ENCODE measurements at regions of chr7 and their contacts with region 1.

Region 1: DNA sequence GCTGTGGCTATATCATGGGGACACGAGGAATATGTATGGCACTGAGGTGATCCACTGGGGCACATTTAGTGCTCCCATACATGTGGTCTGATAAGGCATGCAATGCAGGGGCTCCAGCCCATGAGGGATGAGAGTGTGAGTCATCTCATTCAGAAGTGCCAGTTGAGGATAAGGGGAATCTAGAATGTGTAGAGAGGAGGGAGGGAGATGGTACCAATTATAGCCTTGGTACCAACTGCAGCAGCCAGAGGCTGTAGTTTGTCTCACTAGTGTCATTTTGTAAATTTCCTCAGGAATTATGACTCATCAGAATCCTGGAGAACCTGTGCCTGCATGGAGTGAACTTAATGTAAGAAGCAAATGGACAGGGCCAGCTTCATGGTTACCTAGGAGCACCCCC is 46.2 kb downstream of the LAMB4 start:
- DNase-seq: no peak
- H3K4me3 ChIP-seq: no peak overlapping the region
- H3K27ac ChIP-seq: no peak overlapping the region
- H3K4me1 ChIP-seq: peaks cover 16% of the 10 kb centered on the region
- H3K27me3 ChIP-seq: no peaks in the 10 kb centered on the region
- CTCF ChIP-seq: no peak

Region 2: GRCh38 chr7:108094346-108094745 is 10.4 kb after region 1 on chr7:
- CTCF ChIA-PET with region 1: no interaction called
- POLR2A ChIA-PET with region 1: interaction called, 22 read pairs
- intact Hi-C with region 1: no loop called
- DNase-seq: no peak
- H3K4me3 ChIP-seq: no peak overlapping the region
- H3K27ac ChIP-seq: no peak overlapping the region
- H3K4me1 ChIP-seq: peaks cover 10% of the 10 kb centered on the region
- H3K27me3 ChIP-seq: no peaks in the 10 kb centered on the region
- CTCF ChIP-seq: no peak

Region 3: DNA sequence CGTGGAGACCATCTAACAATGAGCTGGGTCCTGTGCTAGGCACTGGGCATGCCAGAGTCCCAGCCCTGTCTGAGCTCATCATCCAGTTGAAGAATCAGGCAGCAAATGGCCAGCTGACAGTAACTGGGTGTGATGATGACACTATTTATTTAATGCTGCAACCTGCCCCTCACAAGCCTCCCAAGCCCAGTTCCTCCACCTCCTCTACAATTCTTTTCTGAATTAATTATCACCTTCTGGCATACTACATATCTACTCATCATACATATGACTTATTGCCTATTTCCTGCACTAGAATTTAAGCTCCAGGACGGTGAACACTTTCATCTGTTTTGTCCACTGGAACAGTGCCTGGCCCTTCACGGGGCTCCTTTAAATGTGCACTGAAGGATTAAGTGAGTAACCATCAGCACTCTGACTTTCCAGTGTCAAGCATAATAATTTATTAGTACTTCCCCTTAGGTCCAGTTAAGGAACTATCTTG is 142.9 kb after region 1 on chr7:
- CTCF ChIA-PET with region 1: no interaction called
- POLR2A ChIA-PET with region 1: no interaction called
- intact Hi-C with region 1: no loop called
- DNase-seq: no peak
- H3K4me3 ChIP-seq: no peak overlapping the region
- H3K27ac ChIP-seq: no peak overlapping the region
- H3K4me1 ChIP-seq: 0 out of 2 replicates have a peak, but pooled peaks cover 4% of the 10 kb centered on the region
- H3K27me3 ChIP-seq: no peaks in the 10 kb centered on the region
- CTCF ChIP-seq: no peak

Measured in PC-9 (cell line).